ENCODE measurements at regions of chr6 and their contacts with region 1.

Region 1: GRCh38 chr6:28657769-28658465 is 132.2 kb downstream of the GPX5 start:
- DNase-seq: no peak
- H3K4me3 Mint-ChIP-seq: peak overlapping the region; percentile 80
- H3K27ac Mint-ChIP-seq: peak overlapping the region; percentile 77
- H3K4me1 Mint-ChIP-seq: peaks cover 24% of the 10 kb centered on the region
- H3K27me3 Mint-ChIP-seq: peaks cover 66% of the 10 kb centered on the region

Region 2: GRCh38 chr6:28218271-28219248 is 439.4 kb before region 1 on chr6:
- intact Hi-C with region 1: loop called (anchors 10 kb)
- DNase-seq: no peak
- H3K4me3 Mint-ChIP-seq: peak overlapping the region; percentile 83
- H3K27ac Mint-ChIP-seq: no peak overlapping the region
- H3K4me1 Mint-ChIP-seq: peaks cover 12% of the 10 kb centered on the region
- H3K27me3 Mint-ChIP-seq: peaks cover 70% of the 10 kb centered on the region

Region 3: DNA sequence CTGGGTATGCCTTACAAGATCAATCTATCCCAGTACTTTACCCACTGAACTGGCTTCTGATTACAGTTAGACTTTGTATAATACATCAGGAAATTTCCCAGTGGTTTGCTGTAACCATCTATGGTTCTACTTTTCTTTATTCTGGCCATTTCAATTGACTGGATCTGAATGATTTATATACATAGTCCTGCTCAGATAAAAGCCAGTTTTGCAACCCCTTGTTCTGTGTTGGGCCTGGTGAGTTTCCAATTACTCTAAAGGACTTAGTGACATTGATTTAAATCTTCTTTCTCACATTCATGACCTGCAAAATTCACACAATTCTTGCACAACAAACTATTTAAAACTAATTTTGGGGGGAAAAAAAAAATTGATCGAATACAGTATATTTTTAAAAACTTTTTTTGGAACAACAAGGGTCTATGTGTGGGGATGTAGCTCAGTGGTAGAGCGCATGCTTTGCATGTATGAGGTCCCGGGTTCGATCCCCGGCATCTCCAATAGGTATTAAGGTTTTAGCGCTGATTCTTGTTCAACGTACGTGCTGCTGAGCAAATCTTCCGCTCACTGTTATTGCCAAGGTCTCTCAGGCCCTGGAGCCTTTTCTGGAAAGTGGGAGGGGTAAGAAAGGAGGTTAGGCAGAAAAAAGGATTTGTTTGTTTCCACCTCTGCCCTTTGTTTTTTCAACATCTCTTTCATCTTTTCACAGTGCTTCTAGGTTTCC is 14.7 kb before region 1 on chr6:
- intact Hi-C with region 1: no loop called
- DNase-seq: no peak
- H3K4me3 Mint-ChIP-seq: no peak overlapping the region
- H3K27ac Mint-ChIP-seq: no peak overlapping the region
- H3K4me1 Mint-ChIP-seq: peaks cover 3% of the 10 kb centered on the region
- H3K27me3 Mint-ChIP-seq: peaks cover 28% of the 10 kb centered on the region

Region 4: GRCh38 chr6:28673800-28674671 is 16.1 kb after region 1 on chr6:
- intact Hi-C with region 1: loop called (anchors 1 kb)
- DNase-seq: no peak
- H3K4me3 Mint-ChIP-seq: peak overlapping the region; percentile 85
- H3K27ac Mint-ChIP-seq: peak overlapping the region; percentile 64
- H3K4me1 Mint-ChIP-seq: peaks cover 11% of the 10 kb centered on the region
- H3K27me3 Mint-ChIP-seq: peaks cover 34% of the 10 kb centered on the region